Tibial artery (tissue), 4 donors: ENCODE measurements at regions of chr5 and their contacts with region 1.

Region 1: GRCh38 chr5:160021831-160022446 is 13.0 kb downstream of the TTC1 start:
- DNase-seq: peak in 1 of 2 donors; percentile 44
- H3K4me3 ChIP-seq: no peak overlapping the region
- H3K27ac ChIP-seq: no peak overlapping the region
- H3K4me1 ChIP-seq: peaks cover 0 to 11% (median 0%) of the 10 kb centered on the region in 4 donors
- H3K27me3 ChIP-seq: no peaks in the 10 kb centered on the region
- CTCF ChIP-seq: peak; percentile 73 to 88

Region 2: GRCh38 chr5:159341914-159342313 is 680.0 kb before region 1 on chr5:
- intact Hi-C with region 1: no loop called
- DNase-seq: peak; percentile 73 to 76
- H3K4me3 ChIP-seq: no peak overlapping the region
- H3K27ac ChIP-seq: no peak overlapping the region
- H3K4me1 ChIP-seq: peaks cover 0 to 4% (median 0%) of the 10 kb centered on the region in 4 donors
- H3K27me3 ChIP-seq: no peaks in the 10 kb centered on the region
- CTCF ChIP-seq: no peak

Region 3: DNA sequence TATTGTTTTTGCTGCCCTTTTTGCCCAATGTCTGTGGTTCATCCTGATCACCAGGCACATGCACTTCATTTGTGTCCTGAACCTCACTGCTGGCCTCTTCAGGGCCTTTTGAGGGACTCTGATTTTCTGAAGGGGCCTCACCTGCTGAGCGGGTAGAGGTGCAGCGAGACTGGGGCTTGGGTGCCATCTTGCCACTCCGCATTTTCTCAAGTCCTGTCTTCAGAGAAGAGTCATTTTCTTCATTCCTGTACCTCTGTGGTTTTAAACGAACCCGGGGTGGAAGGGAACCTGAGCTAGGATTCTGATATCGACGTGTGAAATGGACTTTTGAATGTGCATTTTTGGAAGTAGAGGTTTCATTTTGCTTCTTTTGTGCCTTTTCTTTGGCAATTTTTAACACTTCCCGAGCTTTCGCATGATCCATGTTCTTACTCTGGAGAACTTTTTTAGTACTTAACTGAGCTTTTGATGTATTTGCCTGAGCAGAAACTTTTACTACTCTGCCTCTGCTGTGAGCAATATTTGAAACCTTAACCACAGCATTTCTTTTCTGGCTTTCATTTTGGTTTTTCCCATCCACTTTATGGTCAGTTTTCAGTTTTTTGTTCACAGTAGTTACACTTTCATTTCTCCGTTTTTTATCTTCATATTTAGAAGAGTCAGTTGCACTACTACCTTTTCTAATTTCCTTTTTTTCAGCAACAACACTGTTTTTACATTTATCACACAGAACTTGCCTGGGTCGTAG is 71.2 kb after region 1 on chr5:
- intact Hi-C with region 1: no loop called
- DNase-seq: no peak
- H3K4me3 ChIP-seq: no peak overlapping the region
- H3K27ac ChIP-seq: no peak overlapping the region
- H3K4me1 ChIP-seq: peaks cover 0 to 15% (median 4%) of the 10 kb centered on the region in 4 donors
- H3K27me3 ChIP-seq: no peaks in the 10 kb centered on the region
- CTCF ChIP-seq: no peak

Region 4: DNA sequence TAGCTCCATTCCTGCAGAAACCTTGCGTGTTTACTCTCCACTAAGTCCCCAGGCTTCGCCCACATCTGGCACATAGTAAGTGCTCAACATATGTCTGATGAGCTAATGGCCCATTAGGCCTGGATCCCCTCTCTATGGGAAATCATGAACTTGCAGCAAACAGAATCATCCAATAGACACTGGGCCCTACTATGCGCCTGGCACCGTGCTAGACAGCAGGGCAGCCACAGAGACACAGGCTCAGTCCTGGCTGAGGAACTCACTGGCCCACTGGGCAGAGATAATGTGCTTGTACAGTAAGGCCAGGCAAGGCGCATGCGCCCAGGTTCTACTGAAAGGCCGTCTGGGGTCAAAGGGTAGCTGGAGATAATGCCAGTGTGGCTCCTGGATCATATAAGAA is 170.5 kb after region 1 on chr5:
- intact Hi-C with region 1: loop called (anchors 5 kb)
- DNase-seq: no peak
- H3K4me3 ChIP-seq: no peak overlapping the region
- H3K27ac ChIP-seq: no peak overlapping the region
- H3K4me1 ChIP-seq: peaks cover 0 to 12% (median 6%) of the 10 kb centered on the region in 4 donors
- H3K27me3 ChIP-seq: no peaks in the 10 kb centered on the region
- CTCF ChIP-seq: no peak

Region 5: GRCh38 chr5:160342403-160342941 is 320.5 kb after region 1 on chr5:
- intact Hi-C with region 1: loop called (anchors 2 kb)
- DNase-seq: peak in 1 of 2 donors; percentile 57
- H3K4me3 ChIP-seq: no peak overlapping the region
- H3K27ac ChIP-seq: no peak overlapping the region
- H3K4me1 ChIP-seq: peaks cover 0 to 5% (median 0%) of the 10 kb centered on the region in 4 donors
- H3K27me3 ChIP-seq: no peaks in the 10 kb centered on the region
- CTCF ChIP-seq: no peak